GM12878 (cell line): ENCODE measurements at regions of chr16 and their contacts with region 1.

Region 1: DNA sequence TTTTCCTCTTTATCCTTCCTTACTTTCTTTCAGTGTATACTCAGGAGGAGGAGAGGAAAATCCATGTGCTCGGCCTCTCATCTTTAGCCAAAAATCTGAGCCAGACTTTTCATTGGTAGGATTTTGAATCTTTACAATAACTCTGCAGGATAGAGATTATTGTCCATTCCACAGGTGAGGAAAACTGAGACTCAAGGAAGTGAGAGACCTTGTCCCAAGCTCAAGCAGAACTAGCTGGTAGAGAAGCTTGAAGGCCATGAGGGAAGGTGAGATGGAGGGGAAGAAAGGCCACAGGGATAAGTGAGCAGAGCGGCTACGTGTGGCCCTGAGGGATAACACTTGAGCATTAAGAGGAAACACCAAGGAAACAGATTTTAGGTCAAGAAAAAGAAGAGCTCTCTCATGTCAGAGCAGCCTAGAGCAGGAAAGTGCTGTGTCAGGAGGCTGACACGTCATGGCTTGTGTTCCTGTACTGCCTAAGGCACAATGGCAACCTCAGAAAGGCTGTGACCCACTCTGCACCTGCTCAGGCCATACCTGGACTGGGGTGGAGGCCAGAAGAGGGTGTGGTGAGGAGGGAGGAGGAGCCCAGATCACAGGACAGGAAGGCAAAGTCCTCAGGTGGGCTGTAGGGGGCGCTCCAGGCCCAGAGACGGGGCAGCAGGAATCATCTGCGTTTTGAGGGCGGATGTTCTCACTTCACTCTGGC is 11.9 kb downstream of the MT4 start:
- DNase-seq: peak; percentile 32
- ATAC-seq: peak; percentile 100
- H3K4me3 ChIP-seq: no peak overlapping the region
- H3K27ac ChIP-seq: no peak overlapping the region
- H3K4me1 ChIP-seq: no peaks in the 10 kb centered on the region
- H3K27me3 ChIP-seq: no peaks in the 10 kb centered on the region
- CTCF ChIP-seq: peak; percentile 89 to 96 (median 95)
- EP300 ChIP-seq: no peak
- POLR2A ChIP-seq: no peak
- RAD21 ChIP-seq: peak; percentile 95

Region 2: DNA sequence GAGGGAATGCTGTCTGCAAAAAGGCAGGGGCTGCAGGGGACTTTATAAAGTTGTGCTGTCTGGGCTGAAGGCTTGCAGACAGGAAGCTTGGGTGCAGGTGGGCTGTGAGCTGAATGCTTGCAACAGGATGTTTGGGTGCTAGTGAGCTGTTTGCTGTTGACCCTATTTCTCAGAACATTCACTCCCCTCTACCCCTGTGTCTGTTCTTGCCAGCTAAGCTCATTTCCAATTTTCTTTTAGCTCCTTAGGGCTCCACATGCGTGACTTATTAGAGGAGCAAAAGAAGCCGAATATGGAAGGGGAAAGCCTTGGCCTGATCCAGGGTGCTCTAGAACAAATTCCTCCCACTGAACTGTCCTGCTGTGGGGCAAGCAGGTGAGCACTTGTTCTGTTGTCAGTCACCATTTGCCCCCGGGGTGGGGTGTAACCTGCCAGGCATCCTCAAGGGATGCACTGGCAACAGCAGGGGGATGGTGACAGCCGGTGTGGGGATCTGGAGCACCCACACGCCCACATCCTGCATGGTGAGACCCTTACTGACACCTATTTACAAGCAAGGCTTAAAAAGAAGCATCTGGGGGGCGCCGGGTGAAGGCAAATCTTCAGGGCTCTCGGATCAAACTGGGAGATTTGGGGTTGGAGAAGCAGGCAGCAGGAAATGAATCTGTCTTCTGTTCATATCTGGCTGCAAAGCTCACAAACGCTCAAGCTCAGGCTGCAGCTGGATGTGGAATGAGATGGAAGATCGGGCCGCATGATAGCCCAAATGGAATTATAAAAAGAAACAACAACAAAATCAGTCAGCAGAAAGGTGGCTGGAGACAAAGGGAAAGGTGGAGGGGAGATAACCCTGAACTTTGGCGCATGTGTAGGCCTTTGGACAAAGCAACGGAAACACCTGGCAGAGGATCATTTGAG is 132.0 kb after region 1 on chr16:
- CTCF ChIA-PET with region 1: interaction called, 90 read pairs
- POLR2A ChIA-PET with region 1: no interaction called
- RAD21 ChIA-PET with region 1: interaction called, 66 read pairs
- SMC1A ChIA-PET with region 1: interaction called, 67 read pairs
- in situ Hi-C with region 1: loop called (anchors 5 kb)
- intact Hi-C with region 1: no loop called
- DNase-seq: no peak
- ATAC-seq: peak; percentile 35; the same call in 1 of the 3 replicates
- H3K4me3 ChIP-seq: no peak overlapping the region
- H3K27ac ChIP-seq: no peak overlapping the region
- H3K4me1 ChIP-seq: no peaks in the 10 kb centered on the region
- H3K27me3 ChIP-seq: no peaks in the 10 kb centered on the region
- CTCF ChIP-seq: no peak
- EP300 ChIP-seq: no peak
- POLR2A ChIP-seq: no peak
- RAD21 ChIP-seq: no peak